ENCODE measurements at regions of chr3 and their contacts with region 1.

Region 1: DNA sequence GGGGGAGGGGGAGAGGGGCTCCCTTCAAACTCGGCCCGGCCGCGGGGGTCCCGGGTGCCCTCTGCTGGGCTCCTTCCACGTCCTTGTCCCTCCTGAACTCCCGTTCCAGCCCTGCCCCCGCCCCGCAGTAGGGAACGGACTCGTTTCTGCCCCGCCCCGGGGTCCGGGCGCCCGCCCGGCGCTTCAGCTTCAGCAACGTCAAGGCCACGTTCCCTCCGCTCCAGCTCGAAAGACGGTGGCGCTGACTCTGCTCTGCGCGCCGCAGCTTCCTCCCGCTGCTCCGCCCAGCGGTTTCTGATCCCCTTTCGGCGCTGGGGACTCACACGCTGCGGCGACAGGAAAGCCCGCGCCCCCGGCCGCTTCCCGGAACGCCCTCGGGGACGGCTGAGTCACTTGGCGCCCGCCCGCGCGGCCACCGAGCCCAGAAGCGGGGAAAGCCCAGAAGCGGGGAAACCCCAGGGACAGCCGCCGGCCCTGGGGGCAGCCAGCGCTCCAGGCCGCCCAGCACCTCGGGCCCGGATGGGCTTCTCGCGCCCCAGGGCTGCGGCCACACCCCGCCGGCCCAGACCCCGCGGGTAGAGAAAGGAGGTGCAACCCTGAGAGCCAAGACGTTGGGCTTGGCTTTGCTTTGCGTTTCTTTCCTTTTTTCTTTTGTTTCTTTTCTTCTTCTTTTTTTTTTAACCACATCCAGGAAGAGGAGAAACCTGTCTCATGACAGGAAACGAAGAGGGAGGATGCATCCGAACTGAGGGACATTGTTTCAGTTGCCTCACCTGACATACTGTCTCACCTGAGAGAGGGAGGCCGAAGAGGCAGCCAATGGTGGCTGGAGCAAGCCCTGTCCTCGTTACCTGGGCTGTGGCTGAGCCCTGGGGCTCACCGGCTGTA is 28.9 kb downstream of the ARHGAP31 start:
- DNase-seq: peak; percentile 70
- H3K4me3 Mint-ChIP-seq: peak overlapping the region; percentile 80
- H3K27ac Mint-ChIP-seq: peak overlapping the region; percentile 90
- H3K4me1 Mint-ChIP-seq: no peaks in the 10 kb centered on the region
- H3K27me3 Mint-ChIP-seq: no peaks in the 10 kb centered on the region
- CTCF ChIP-seq: no peak

Region 2: DNA sequence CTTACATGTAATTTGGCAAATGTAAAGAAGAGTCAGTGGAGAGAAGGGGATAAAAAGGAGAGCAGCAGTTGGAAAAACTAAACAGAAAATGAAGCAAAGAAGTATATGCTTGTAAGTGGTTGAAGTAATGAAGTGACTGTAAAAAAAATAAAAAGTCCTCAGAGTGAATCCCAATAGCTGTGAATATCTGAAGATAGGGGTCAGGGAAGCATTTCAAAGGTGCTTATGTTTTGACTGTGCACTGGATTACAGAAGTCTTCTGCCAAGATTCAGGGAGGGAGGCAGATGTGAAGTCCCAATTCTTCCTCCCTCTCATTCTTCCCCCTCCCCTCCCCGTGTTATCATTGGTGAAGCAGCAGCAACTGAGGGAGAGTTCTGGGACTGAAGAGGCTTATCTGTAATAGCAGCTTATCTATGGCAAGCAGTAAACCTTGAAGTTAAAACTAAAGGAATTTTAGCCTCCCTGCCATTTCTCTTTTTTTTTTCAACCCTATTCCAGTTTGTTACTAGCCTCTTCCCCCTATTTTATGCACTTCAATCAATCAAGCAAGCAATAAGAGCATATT is 886.3 kb before region 1 on chr3:
- CTCF ChIA-PET with region 1: no interaction called
- POLR2A ChIA-PET with region 1: no interaction called
- intact Hi-C with region 1: no loop called
- DNase-seq: no peak
- H3K4me3 Mint-ChIP-seq: no peak overlapping the region
- H3K27ac Mint-ChIP-seq: no peak overlapping the region
- H3K4me1 Mint-ChIP-seq: no peaks in the 10 kb centered on the region
- H3K27me3 Mint-ChIP-seq: no peaks in the 10 kb centered on the region
- CTCF ChIP-seq: no peak

Region 3: GRCh38 chr3:119293871-119294695 is 29.0 kb before region 1 on chr3 and contains the start of gene ARHGAP31:
- CTCF ChIA-PET with region 1: interaction called, 4 read pairs
- POLR2A ChIA-PET with region 1: interaction called, 25 read pairs
- intact Hi-C with region 1: no loop called
- DNase-seq: peak; percentile 51
- H3K4me3 Mint-ChIP-seq: peak within 1 kb of the TSS; percentile 81
- H3K27ac Mint-ChIP-seq: peak within 1 kb of the TSS; percentile 63
- H3K4me1 Mint-ChIP-seq: peaks cover 13% of the 10 kb centered on the region
- H3K27me3 Mint-ChIP-seq: no peaks in the 10 kb centered on the region
- CTCF ChIP-seq: no peak
- total RNA-seq, gene ARHGAP31: 4.4 and 4.7 TPM in 2 replicates

Region 4: GRCh38 chr3:119300991-119301391 is 22.1 kb before region 1 on chr3:
- CTCF ChIA-PET with region 1: no interaction called
- POLR2A ChIA-PET with region 1: interaction called, 25 read pairs
- intact Hi-C with region 1: no loop called
- DNase-seq: peak; percentile 42
- H3K4me3 Mint-ChIP-seq: no peak overlapping the region
- H3K27ac Mint-ChIP-seq: peak overlapping the region; percentile 64
- H3K4me1 Mint-ChIP-seq: peaks cover 41% of the 10 kb centered on the region
- H3K27me3 Mint-ChIP-seq: no peaks in the 10 kb centered on the region
- CTCF ChIP-seq: no peak

Measured in MCF 10A (cell line).